SK-N-SH (cell line): ENCODE measurements at regions of chr11 and their contacts with region 1.

Region 1: DNA sequence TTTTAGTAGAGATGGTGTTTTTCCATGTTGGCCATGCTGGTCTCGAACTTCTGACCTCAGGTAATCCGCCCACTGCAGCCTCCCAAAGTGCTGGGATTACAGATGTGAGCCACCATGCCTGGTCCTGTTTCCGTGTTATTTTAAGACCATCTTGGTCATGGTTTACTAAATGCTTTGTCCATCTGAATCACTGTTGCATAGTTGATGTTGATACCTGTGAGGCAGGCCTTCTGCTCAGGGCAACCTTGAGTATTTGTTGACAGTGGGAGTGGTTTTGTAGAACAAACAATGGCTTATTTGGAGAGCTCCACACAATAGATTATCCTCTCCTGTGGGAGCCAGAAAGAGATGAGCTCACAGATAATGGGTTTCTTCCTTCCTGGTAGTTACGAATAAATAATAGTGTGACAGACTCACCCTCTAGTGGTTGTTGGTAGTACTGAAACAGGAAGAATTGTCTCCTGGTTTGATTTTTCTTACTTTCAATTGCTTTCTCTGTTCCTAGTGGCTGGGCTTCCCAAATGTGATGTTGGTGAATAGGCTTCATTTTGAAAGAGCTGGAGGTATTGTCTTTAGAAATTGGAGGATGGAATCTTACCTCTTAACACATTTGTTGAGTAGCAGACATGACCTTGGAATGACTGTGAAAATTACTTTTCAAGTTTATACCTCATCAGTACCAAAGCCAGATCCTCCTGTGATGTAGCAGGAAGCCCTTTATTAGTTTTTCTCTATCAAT is 39.0 kb downstream of the CTNND1 start:
- DNase-seq: peak; percentile 77
- H3K4me3 ChIP-seq: no peak overlapping the region; a peak in 1 of 4 replicates
- H3K27ac ChIP-seq: peak overlapping the region; percentile 48 to 63; a peak in 3 of 4 replicates
- H3K4me1 ChIP-seq: peaks cover 17 to 26% of the 10 kb centered on the region in 2 experiments
- H3K27me3 ChIP-seq: no peaks in the 10 kb centered on the region
- CTCF ChIP-seq: peak; percentile 87
- EP300 ChIP-seq: no peak
- RAD21 ChIP-seq: peak; percentile 96

Region 2: DNA sequence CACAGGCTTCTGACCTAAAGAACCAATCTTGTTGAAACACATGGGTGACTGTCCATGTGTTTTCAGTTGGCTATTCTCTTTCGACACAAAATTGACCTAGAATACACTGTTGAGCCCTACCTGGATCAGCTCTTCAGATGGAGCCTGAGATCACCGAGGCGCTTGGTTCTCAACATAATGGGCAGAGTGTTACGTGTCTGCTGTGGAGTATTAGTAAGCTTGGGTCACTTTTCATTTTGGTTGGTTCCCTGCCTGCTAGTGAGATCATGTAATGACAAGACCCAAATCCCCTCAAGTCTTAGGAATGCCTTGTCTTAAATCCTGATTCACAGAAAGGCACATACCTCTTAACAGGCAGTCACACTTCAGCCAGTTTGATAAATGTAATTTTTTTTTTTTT is 97.3 kb before region 1 on chr11:
- CTCF ChIA-PET with region 1: interaction called, 15 read pairs
- POLR2A ChIA-PET with region 1: interaction called, 3 read pairs
- DNase-seq: no peak
- H3K4me3 ChIP-seq: no peak overlapping the region
- H3K27ac ChIP-seq: 0 out of 4 replicates have a peak overlapping the region, but pooled peaks of 1 of the 2 experiments have one; percentile 21
- H3K4me1 ChIP-seq: peaks cover 0 to 3% of the 10 kb centered on the region in 2 experiments; a peak in 1 of 4 replicates
- H3K27me3 ChIP-seq: no peaks in the 10 kb centered on the region
- CTCF ChIP-seq: no peak
- EP300 ChIP-seq: no peak
- RAD21 ChIP-seq: no peak

Region 3: DNA sequence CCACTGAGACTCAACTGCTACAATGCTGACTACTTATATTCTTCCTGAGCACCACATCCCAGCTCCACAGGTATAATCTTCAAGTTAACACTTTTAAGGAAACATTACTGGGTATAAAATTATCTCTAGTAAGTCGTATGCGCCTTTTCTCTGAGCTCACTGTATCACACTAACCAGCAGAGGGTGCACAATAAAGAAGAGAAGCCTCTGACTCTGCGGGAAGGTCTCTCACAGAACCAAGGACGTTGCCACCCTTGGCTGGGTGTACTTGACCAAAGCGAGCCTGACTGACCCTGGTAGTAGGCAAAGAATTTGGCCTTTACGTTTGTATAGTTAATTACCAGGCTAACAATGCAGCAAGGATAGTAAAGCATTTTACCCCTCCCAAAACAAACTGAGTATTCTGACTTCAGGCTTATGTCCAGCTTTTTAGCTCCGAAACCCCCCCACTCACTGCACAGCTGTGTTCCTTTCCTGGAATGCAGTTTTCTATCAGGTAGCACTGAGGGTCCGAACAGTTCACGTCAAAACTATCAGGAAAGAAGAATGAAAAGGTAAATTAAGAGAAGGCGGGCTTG is 48.8 kb before region 1 on chr11 and contains the start of gene BTBD18:
- CTCF ChIA-PET with region 1: interaction called, 142 read pairs
- POLR2A ChIA-PET with region 1: interaction called, 12 read pairs
- DNase-seq: peak; percentile 67
- H3K4me3 ChIP-seq: no peak within 1 kb of the TSS; a peak in 1 of 4 replicates
- H3K27ac ChIP-seq: no peak within 1 kb of the TSS
- H3K4me1 ChIP-seq: no peaks in the 10 kb centered on the region
- H3K27me3 ChIP-seq: no peaks in the 10 kb centered on the region
- CTCF ChIP-seq: peak; percentile 54
- EP300 ChIP-seq: no peak
- RAD21 ChIP-seq: peak; percentile 60
- polyA plus RNA-seq, gene BTBD18: not detected in 2 replicates

Region 4: DNA sequence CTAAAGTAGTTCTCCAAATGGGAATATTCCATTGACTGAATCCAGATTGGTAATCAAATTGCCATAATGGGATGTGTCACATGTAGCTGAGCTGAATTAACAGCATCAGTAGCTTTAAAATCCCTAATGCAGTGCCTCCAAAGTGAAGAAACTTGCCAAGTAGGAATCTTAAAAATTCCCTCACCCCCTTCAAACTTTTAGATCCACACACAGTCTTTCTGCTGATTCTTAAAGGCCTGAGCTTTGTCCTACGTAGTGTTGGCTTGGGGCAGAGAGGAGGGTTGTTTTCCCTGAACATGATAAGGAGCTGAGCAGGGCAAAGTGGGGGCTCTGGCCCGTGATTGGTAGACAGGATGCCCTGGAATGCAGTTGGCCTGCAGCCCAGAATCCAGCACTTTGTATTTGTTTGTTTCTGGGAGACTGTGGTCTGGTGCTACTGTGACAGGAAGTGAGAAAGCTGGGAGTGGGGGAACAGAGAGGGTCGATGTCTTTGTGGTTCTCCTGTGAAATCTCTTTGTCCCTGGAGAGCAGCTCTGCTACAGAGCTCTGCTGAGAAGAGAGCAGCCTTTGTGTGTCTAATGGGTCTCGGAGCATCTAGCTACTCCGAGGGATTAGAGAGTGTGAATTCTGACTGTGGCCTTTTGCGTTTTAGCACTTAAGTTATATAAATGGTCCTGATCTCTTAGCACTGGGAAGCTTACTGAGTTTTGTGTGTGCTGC is 22.1 kb before region 1 on chr11:
- CTCF ChIA-PET with region 1: interaction called, 43 read pairs
- POLR2A ChIA-PET with region 1: interaction called, 3 read pairs
- DNase-seq: peak; percentile 83
- H3K4me3 ChIP-seq: peak overlapping the region; percentile 19 to 43
- H3K27ac ChIP-seq: peak overlapping the region; percentile 89 to 92
- H3K4me1 ChIP-seq: peaks cover 35 to 53% of the 10 kb centered on the region in 2 experiments
- H3K27me3 ChIP-seq: no peaks in the 10 kb centered on the region
- CTCF ChIP-seq: no peak
- EP300 ChIP-seq: peak in 1 of 2 experiments; percentile 52; a peak in 3 of 4 replicates
- RAD21 ChIP-seq: no peak